ENCODE measurements at regions of chrX and their contacts with region 1.

Region 1: GRCh38 chrX:23782863-23783568 is at the start of gene SAT1:
- DNase-seq: peak; percentile 90
- H3K4me3 Mint-ChIP-seq: peak within 1 kb of the TSS; percentile 97
- H3K27ac Mint-ChIP-seq: peak within 1 kb of the TSS; percentile 95
- H3K4me1 Mint-ChIP-seq: peaks cover 38% of the 10 kb centered on the region
- H3K27me3 Mint-ChIP-seq: no peaks in the 10 kb centered on the region
- total RNA-seq, gene SAT1: 71.8 and 74.8 TPM in 2 replicates

Region 2: DNA sequence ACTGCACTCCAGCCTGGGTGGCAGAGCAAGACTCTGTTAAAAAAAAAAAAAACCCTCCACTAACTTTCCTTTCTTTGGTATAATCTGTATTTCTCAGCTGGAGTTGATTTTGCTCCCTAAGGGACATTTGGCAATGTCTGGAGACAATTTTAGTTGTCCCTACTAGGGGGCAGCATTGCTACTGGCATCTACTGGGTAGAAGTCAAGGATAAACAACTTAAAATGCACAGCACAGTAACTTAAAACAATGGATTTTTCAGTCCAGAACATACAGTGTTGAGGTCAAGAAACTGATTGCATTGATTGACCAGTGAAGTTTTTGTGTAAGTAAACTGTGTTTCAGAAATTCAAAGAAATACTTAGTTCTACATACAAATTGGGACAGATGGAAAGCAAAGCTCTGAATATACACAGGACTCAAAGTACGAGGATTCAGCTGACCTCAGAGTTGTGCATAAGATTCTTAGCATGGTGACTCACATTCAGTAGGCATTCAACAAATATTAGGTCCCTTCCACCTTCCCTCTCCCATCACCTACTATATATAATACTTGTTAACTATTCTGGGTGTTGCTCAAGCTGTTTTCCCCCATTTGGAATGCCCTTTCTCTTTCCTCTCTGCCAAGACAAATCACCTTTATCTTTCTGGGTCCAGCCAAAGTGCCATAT is 774.5 kb before region 1 on chrX:
- intact Hi-C with region 1: no loop called
- DNase-seq: no peak
- H3K4me3 Mint-ChIP-seq: no peak overlapping the region
- H3K27ac Mint-ChIP-seq: no peak overlapping the region
- H3K4me1 Mint-ChIP-seq: no peaks in the 10 kb centered on the region
- H3K27me3 Mint-ChIP-seq: no peaks in the 10 kb centered on the region

Region 3: DNA sequence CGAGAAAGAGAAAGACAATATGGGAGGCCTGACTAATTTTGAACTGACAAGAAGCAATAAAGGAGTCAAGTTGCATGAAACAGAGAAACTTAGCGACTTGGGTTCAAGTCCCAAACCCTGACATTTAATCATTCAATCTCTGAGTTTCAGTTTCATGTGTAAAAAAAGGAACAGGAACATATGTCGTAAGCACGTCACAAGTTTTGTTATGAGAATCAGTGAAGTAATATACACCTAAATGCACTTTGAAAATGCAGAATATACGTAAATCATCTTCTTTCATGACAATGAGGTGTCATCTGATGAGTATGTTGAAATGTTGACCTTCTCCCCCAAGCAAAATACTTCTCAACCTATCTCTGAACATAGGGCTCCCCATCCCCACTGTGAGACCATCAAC is 50.3 kb before region 1 on chrX:
- intact Hi-C with region 1: loop called (anchors 1 kb)
- DNase-seq: no peak
- H3K4me3 Mint-ChIP-seq: peak overlapping the region; percentile 30
- H3K27ac Mint-ChIP-seq: peak overlapping the region; percentile 83
- H3K4me1 Mint-ChIP-seq: peaks cover 29% of the 10 kb centered on the region
- H3K27me3 Mint-ChIP-seq: no peaks in the 10 kb centered on the region

Region 4: DNA sequence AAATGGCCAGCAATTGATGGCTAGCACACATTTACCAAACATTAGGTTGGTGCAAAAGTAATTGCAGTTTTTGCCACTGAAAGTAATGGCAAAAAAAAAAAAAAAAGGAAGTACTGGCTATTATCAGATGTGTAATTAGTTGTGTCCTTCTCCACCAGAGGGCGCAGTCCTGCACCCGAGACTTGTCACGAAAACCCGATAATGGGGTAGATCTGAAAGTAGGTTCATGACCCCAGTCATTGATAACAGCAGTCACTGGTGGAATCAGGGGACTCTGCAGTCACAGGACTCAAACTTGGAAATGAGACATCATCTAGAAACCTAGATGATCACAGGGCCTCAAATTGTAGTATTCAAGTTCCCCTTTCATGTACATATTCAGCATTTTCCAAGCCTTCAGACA is 26.9 kb before region 1 on chrX:
- intact Hi-C with region 1: loop called (anchors 2 kb)
- DNase-seq: peak; percentile 44
- H3K4me3 Mint-ChIP-seq: no peak overlapping the region
- H3K27ac Mint-ChIP-seq: no peak overlapping the region
- H3K4me1 Mint-ChIP-seq: peaks cover 5% of the 10 kb centered on the region
- H3K27me3 Mint-ChIP-seq: no peaks in the 10 kb centered on the region

Region 5: DNA sequence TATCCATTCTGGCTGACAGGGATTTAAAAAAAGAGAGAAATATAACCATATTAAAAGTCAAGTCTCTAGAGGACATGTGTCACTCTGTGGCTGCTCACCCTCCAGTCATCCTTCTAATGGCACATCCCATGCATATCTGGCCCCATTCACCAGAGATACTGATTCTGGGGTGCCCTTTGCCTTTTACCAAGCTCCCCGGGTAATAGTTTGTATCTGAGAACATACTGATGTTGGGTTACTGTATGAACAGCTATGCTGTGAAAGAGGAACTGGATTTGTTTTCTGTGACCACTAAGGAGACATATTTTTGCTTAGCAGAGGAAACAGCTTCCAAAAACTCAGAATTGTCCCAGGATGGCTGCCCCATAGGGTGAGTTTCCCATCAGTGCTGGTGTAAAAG is 55.9 kb after region 1 on chrX:
- intact Hi-C with region 1: no loop called
- DNase-seq: no peak
- H3K4me3 Mint-ChIP-seq: no peak overlapping the region
- H3K27ac Mint-ChIP-seq: no peak overlapping the region
- H3K4me1 Mint-ChIP-seq: no peaks in the 10 kb centered on the region
- H3K27me3 Mint-ChIP-seq: no peaks in the 10 kb centered on the region

Region 6: GRCh38 chrX:23854945-23855344 is 71.9 kb after region 1 on chrX:
- intact Hi-C with region 1: no loop called
- DNase-seq: no peak
- H3K4me3 Mint-ChIP-seq: no peak overlapping the region
- H3K27ac Mint-ChIP-seq: no peak overlapping the region
- H3K4me1 Mint-ChIP-seq: no peaks in the 10 kb centered on the region
- H3K27me3 Mint-ChIP-seq: no peaks in the 10 kb centered on the region

Region 7: DNA sequence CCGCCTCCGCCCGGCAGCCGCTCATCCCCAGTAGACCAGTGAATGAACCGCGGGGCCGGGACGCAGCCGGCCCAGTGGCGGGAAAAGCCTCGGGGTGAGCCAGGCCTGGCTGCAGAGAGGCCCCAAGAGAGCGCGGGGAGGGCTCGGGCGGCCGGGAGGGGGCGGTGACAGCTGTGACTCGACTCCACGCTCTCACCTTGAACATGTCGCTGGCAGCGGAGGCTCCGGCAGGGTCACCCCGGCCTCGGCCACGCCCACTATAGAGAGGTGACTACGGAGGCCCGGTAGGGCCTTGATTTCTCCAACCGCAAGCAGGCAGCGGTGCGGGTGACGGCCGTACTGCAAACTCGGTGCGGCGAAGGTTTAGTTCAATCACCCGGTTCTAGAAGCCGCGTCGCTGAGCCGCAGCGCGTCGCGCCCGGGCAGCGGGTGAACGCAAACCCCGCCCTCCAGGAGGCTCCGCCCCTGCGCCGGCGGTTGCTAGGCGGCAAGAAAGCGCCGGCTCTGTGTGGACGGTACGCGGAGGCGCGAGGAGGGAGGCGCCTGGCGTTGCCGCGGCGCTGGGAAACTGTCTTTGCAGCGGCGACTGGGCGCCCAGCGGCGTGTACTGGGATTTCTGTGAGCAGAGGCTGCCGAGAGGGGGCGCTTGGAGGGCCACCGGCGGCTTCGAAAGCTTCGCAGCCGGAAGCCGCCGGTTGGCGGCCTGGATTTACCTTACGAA is 124.6 kb after region 1 on chrX and contains the starts of genes APOO and CXorf58:
- intact Hi-C with region 1: loop called (anchors 1 kb)
- DNase-seq: peak; percentile 88
- H3K4me3 Mint-ChIP-seq: peak within 1 kb of the TSS; percentile 85
- H3K27ac Mint-ChIP-seq: peak within 1 kb of the TSS; percentile 89
- H3K4me1 Mint-ChIP-seq: peaks cover 13% of the 10 kb centered on the region
- H3K27me3 Mint-ChIP-seq: no peaks in the 10 kb centered on the region
- total RNA-seq, gene APOO: 29.0 and 30.0 TPM in 2 replicates
- total RNA-seq, gene CXorf58: not detected in 2 replicates

Region 8: DNA sequence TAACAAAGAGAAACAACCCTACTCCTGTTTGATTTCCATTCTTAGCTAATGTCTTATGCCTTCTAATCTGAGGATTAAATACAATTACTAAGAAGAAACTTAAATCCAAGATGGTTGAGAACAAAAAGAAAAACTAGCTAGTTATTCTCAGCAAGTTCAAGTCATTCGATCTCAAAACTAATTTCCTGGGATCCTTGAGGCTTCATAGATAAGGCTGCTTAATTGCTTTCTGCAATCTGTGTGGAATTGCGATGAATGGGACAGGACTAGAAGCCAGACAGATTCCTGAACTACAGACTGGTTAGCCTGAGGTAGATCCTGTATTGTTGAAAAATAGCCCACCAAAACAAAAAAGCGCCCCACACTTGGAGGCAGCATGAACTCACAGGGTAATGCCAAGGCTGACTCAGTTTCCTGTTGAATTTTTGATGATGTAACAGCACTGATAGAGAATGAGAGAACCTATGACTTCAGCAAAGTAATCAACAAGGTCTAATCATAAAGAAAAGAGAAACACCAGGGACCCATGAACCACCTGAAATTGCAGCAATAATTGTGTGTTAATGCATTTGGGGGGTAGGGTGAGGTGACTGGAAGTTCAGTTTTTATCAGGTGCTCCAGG is 210.1 kb after region 1 on chrX:
- intact Hi-C with region 1: no loop called
- DNase-seq: no peak
- H3K4me3 Mint-ChIP-seq: no peak overlapping the region
- H3K27ac Mint-ChIP-seq: peak overlapping the region; percentile 40
- H3K4me1 Mint-ChIP-seq: peaks cover 20% of the 10 kb centered on the region
- H3K27me3 Mint-ChIP-seq: no peaks in the 10 kb centered on the region

Region 9: DNA sequence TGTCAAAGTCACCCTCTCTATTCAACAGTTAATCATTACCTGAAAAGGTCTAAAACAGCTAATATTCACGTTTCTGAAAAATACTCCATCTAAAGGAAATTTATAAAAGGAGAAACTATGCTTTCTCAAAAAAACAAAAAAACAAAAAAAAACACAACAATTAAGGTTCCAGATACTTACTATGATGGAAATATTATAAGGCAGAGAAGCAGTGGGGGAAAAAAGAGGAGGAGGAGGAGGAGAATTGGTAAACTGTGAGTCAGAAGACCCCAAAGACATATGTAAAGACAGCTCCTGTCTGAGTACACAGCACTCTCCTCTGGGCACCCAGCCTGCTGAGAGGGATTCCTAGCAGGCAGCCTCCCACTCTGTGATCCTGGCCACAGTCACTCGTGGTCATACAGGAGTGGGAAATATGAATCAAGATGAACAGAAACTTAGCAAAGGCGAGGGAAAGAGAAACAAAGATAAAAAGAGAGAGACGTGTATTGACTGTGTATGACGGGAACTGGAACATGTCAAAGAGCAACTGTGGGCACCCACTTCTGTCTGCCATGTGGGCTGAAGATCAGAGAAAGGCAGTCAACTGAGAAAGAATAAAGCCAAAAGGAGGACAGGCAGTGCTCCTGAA is 231.5 kb after region 1 on chrX:
- intact Hi-C with region 1: loop called (anchors 1 kb)
- DNase-seq: peak; percentile 21
- H3K4me3 Mint-ChIP-seq: peak overlapping the region; percentile 64
- H3K27ac Mint-ChIP-seq: peak overlapping the region; percentile 89
- H3K4me1 Mint-ChIP-seq: peaks cover 36% of the 10 kb centered on the region
- H3K27me3 Mint-ChIP-seq: no peaks in the 10 kb centered on the region

Region 10: GRCh38 chrX:24054182-24055042 is 271.4 kb after region 1 on chrX and contains the start of gene EIF2S3:
- intact Hi-C with region 1: loop called (anchors 1 kb)
- DNase-seq: peak; percentile 81
- H3K4me3 Mint-ChIP-seq: no peak within 1 kb of the TSS
- H3K27ac Mint-ChIP-seq: peak within 1 kb of the TSS; percentile 98
- H3K4me1 Mint-ChIP-seq: no peaks in the 10 kb centered on the region
- H3K27me3 Mint-ChIP-seq: no peaks in the 10 kb centered on the region
- total RNA-seq, gene EIF2S3: 191 and 194 TPM in 2 replicates

Region 11: DNA sequence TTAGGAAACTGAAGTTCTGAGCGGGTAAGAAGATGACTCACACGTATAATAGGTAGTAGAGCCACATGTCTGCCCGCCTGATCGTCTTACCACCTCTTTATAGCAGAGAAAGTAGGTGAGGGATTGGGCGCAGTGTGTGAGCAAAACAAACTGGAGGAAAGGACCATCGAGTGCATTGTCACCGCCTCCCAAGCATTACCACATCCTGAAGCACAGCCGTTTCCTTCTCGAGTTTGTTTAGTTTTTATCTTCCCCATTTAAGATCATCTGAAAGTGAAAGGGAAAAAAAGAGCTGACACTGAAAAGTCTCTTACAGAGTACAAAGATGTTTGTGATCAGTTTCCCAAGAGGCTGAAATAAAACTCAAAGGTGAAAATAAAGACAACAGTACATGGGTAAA is 696.9 kb after region 1 on chrX:
- intact Hi-C with region 1: loop called (anchors 5 kb)
- DNase-seq: peak; percentile 71
- H3K4me3 Mint-ChIP-seq: peak overlapping the region; percentile 65
- H3K27ac Mint-ChIP-seq: peak overlapping the region; percentile 92
- H3K4me1 Mint-ChIP-seq: peaks cover 45% of the 10 kb centered on the region
- H3K27me3 Mint-ChIP-seq: no peaks in the 10 kb centered on the region

Measured in activated T-helper 1 cell treated with anti-CD3 and anti-CD28 coated beads, Interleukin-12 subunit alpha, Interleukin-12 subunit beta, Interleukin-2, Interleukin-4 antibody, amounts not matched to agents 30 ng/mL and 10 ng/mL and 1 ng/mL, durations not matched to agents 14 hours and 24 hours and 36 hours (primary cell).